T-cell (primary cell): ENCODE measurements at regions of chr2 and their contacts with region 1.

Region 1: GRCh38 chr2:218301176-218301819 is 9.0 kb upstream of the TMBIM1 start:
- DNase-seq: peak; percentile 67 to 93 (median 83)
- ATAC-seq: peak; percentile 92 to 95 (median 93)
- H3K4me3 ChIP-seq: no peak overlapping the region
- H3K4me3 Mint-ChIP-seq: no peak overlapping the region
- H3K27ac ChIP-seq: no peak overlapping the region
- H3K27ac Mint-ChIP-seq: peak overlapping the region; percentile 66 to 68
- H3K4me1 ChIP-seq: peaks cover 0 to 7% of the 10 kb centered on the region in 2 experiments
- H3K4me1 Mint-ChIP-seq: peaks cover 6% of the 10 kb centered on the region in 3 donors
- H3K27me3 ChIP-seq: no peaks in the 10 kb centered on the region
- H3K27me3 Mint-ChIP-seq: no peaks in the 10 kb centered on the region

Region 2: DNA sequence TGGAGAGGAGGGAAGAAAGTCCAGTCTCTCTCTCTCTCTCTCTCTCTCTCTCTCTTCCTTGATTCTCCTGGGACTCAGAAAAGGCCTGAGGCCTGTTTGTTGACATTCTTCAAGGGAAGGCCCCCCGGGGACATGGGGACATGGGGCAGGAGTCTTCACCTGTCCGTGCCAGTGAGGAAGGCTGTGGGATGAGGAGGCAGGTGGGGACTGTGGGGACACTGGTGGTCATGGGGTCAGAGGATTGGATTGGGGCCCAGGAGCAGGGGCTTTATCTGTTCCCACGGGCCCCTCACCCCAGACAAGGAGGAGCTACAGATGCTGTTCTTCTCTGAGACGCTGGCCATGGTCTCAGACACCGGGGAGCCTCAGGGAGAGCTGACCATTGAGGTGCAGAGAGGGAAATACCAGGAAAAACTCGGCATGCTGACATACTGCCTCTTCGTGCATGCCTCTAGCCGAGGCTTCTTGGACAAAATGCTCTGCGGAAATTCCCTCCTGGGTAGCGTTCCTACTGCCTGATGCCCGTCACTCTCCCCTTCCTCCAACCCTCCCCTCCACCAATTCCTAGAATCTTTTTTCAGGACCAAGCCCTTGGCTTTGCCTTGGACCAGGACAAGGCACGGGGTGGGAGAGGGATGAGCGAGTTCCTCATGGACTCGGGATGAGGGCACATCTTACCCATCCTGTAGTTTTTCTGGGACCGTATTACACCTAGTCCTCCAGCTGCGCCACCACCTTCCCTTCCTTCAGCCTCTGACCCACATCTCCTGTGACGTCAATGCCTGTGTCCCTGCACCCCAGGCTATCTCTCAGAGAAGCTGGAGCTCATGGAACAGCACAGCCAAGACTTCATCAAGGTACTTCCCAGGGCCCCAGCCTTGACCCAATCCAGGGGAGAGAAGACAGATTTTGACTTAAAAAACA is 56.2 kb after region 1 on chr2:
- CTCF ChIA-PET with region 1: interaction called, 9 to 27 read pairs
- POLR2A ChIA-PET with region 1: no interaction called
- DNase-seq: no peak
- ATAC-seq: no peak
- H3K4me3 ChIP-seq: no peak overlapping the region
- H3K4me3 Mint-ChIP-seq: no peak overlapping the region
- H3K27ac ChIP-seq: no peak overlapping the region
- H3K27ac Mint-ChIP-seq: no peak overlapping the region
- H3K4me1 ChIP-seq: peaks cover 0 to 8% of the 10 kb centered on the region in 2 experiments
- H3K4me1 Mint-ChIP-seq: peaks cover 0 to 4% (median 2%) of the 10 kb centered on the region in 3 donors
- H3K27me3 ChIP-seq: peaks cover 0 to 7% of the 10 kb centered on the region in 2 experiments
- H3K27me3 Mint-ChIP-seq: no peaks in the 10 kb centered on the region